AG04449 (cell line): ENCODE measurements at regions of chr16 and their contacts with region 1.

Region 1: GRCh38 chr16:70162041-70162451 is 11.5 kb upstream of the CLEC18C start:
- DNase-seq: peak; percentile 38
- H3K4me3 ChIP-seq: no peak overlapping the region
- CTCF ChIP-seq: no peak

Region 2: DNA sequence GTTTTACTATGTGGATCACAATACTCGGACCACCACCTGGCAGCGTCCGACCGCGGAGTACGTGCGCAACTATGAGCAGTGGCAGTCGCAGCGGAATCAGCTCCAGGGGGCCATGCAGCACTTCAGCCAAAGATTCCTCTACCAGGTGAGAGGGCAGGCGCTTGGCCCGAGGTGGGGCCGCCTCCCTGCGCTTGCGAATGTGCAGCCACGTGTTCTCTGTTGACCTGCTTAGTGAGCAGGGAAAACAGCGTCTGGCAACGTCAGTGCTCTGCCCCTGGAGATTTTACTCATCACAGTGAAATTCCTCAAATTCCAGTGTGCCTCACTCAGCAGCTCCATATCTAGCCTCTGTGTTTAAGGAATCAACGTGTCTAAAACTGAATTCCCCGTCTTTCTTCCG is 244.3 kb before region 1 on chr16:
- CTCF ChIA-PET with region 1: no interaction called
- POLR2A ChIA-PET with region 1: no interaction called
- DNase-seq: peak; percentile 91
- H3K4me3 ChIP-seq: peak overlapping the region; percentile 44
- CTCF ChIP-seq: no peak

Region 3: DNA sequence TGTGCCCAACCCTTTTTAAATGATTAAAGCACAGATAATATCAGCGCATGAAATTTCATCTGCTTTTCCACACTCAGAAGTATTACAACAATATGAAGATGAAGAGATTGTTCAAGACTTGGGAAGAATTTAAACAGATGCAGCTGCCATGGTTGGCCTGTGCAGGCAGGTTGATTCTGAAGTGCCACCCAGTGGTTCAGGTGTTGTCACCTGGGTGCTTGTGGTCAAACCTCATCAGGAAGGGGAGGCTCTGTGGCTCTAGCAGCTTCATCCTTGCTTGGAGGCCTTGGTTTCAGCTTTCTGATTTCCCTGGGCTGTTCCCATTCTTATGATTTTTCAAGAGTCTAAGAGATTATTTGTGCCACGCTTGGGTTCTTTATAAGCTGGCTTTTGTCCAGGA is 10.7 kb before region 1 on chr16:
- CTCF ChIA-PET with region 1: interaction called, 18 read pairs
- POLR2A ChIA-PET with region 1: no interaction called
- DNase-seq: no peak
- H3K4me3 ChIP-seq: no peak overlapping the region
- CTCF ChIP-seq: no peak